Activated T-helper 1 cell treated with anti-CD3 and anti-CD28 coated beads, Interleukin-12 subunit alpha, Interleukin-12 subunit beta, Interleukin-2, Interleukin-4 antibody, amounts not matched to agents 30 ng/mL and 10 ng/mL and 1 ng/mL, durations not matched to agents 14 hours and 24 hours and 36 hours (primary cell): ENCODE measurements at regions of chr4 and their contacts with region 1.

Region 1: GRCh38 chr4:112604589-112604988 is 32.1 kb downstream of the ZGRF1 start:
- DNase-seq: peak; percentile 9
- H3K4me3 Mint-ChIP-seq: no peak overlapping the region
- H3K27ac Mint-ChIP-seq: no peak overlapping the region
- H3K4me1 Mint-ChIP-seq: no peaks in the 10 kb centered on the region
- H3K27me3 Mint-ChIP-seq: no peaks in the 10 kb centered on the region

Region 2: GRCh38 chr4:112075129-112075753 is 529.3 kb before region 1 on chr4:
- intact Hi-C with region 1: loop called (anchors 2 kb)
- DNase-seq: no peak
- H3K4me3 Mint-ChIP-seq: no peak overlapping the region
- H3K27ac Mint-ChIP-seq: no peak overlapping the region
- H3K4me1 Mint-ChIP-seq: no peaks in the 10 kb centered on the region
- H3K27me3 Mint-ChIP-seq: peaks cover 17% of the 10 kb centered on the region

Region 3: DNA sequence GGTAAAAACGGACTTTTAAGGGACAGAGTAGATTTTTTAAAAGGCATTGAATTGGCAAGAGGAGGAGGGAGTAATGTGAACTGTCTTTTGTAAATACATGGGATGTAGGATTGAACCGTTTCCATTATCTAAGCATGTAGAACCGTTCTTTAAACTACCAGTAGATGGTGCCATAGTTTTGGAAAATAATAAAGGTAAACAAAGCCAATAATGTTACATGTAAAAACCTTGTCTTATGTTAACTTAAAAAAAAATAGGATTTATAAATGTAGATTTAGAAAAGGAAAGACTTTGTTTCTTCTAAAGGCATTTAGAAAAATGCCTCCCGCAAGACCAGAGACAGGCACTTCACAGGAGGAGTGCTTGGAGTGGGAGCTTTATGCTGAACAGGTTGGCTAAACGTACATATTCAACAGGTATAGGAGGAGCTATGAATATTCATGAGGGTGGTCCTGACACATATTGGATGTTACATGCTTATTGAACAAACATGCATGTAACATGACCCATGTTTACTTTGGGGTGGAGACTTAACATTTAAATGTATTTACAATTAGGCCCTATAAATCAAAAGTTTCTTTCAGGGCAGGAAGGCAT is 504.8 kb before region 1 on chr4:
- intact Hi-C with region 1: loop called (anchors 1 kb)
- DNase-seq: no peak
- H3K4me3 Mint-ChIP-seq: no peak overlapping the region
- H3K27ac Mint-ChIP-seq: no peak overlapping the region
- H3K4me1 Mint-ChIP-seq: peaks cover 20% of the 10 kb centered on the region
- H3K27me3 Mint-ChIP-seq: peaks cover 22% of the 10 kb centered on the region

Region 4: DNA sequence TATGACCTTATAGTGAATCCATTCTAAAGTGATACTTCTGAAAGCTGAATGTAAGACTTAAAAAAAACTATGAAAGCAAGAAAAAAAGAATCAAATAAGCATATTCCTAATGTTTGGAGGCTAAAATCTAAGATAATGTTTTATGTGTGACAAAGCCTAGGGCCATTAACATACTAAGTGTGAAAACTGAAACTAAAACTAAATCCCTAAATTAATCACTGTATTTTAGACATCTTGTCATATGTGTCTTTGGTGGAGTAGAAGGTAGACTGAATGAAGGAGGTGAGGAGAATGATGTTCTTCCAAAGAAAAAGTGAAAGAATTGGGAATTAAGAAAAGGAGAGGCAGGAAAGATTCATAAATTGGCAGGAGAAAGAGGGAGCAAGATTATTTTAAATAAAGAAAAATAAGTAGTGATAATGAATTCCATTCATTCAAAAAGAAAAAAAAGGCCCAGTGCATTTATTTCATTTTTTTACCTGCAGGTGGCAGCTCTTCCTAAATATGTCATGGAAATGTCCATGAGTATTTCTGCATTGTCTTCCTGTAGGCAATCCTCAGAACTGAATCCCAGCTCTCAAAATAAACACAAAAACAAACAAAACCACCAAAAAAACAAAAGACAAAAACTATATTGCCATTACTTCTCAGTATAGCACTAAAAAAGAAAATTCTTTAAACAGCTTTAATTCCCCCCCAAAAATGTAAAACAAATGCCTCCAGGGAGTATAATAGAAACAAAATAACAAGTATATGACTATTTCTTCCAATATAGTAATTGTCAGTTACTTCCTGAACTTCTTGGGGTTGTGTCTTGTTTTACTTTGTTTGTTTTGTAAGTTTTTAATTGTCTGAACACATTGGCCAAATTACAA is 390.0 kb before region 1 on chr4:
- intact Hi-C with region 1: loop called (anchors 1 kb)
- DNase-seq: no peak
- H3K4me3 Mint-ChIP-seq: no peak overlapping the region
- H3K27ac Mint-ChIP-seq: no peak overlapping the region
- H3K4me1 Mint-ChIP-seq: peaks cover 9% of the 10 kb centered on the region
- H3K27me3 Mint-ChIP-seq: no peaks in the 10 kb centered on the region

Region 5: GRCh38 chr4:112321776-112322684 is 282.6 kb before region 1 on chr4:
- intact Hi-C with region 1: loop called (anchors 1 kb)
- DNase-seq: peak; percentile 64
- H3K4me3 Mint-ChIP-seq: no peak overlapping the region
- H3K27ac Mint-ChIP-seq: no peak overlapping the region
- H3K4me1 Mint-ChIP-seq: peaks cover 52% of the 10 kb centered on the region
- H3K27me3 Mint-ChIP-seq: no peaks in the 10 kb centered on the region

Region 6: GRCh38 chr4:112327965-112328733 is 276.4 kb before region 1 on chr4:
- intact Hi-C with region 1: loop called (anchors 1 kb)
- DNase-seq: no peak
- H3K4me3 Mint-ChIP-seq: no peak overlapping the region
- H3K27ac Mint-ChIP-seq: no peak overlapping the region
- H3K4me1 Mint-ChIP-seq: peaks cover 8% of the 10 kb centered on the region
- H3K27me3 Mint-ChIP-seq: no peaks in the 10 kb centered on the region

Region 7: DNA sequence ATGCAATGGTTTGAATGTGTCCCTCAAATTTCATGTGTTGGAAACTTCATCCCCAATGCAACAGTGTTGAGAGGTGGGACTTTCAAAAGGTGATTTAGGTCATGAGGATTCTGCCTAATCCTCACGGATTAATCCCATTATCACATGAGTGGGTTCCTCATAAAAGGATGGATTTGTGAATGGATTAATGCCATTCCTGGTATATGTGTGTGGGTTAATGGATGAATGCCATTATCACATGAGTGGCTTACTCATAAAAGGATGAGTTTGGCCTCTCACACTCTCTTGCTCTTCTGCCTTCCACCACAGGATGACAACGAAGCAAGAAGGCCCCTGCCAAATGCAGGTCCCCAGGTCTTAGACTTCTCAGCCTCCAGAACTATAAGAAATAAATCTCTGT is 58.1 kb before region 1 on chr4:
- intact Hi-C with region 1: no loop called
- DNase-seq: no peak
- H3K4me3 Mint-ChIP-seq: no peak overlapping the region
- H3K27ac Mint-ChIP-seq: no peak overlapping the region
- H3K4me1 Mint-ChIP-seq: no peaks in the 10 kb centered on the region
- H3K27me3 Mint-ChIP-seq: no peaks in the 10 kb centered on the region

Region 8: GRCh38 chr4:112802780-112803179 is 198.2 kb after region 1 on chr4:
- intact Hi-C with region 1: no loop called
- DNase-seq: no peak
- H3K4me3 Mint-ChIP-seq: no peak overlapping the region
- H3K27ac Mint-ChIP-seq: no peak overlapping the region
- H3K4me1 Mint-ChIP-seq: no peaks in the 10 kb centered on the region
- H3K27me3 Mint-ChIP-seq: peaks cover 2% of the 10 kb centered on the region